ENCODE measurements at regions of chr3 and their contacts with region 1.

Region 1: GRCh38 chr3:168847291-168847883 is 751.7 kb upstream of the GOLIM4 start:
- DNase-seq: no peak
- H3K4me3 Mint-ChIP-seq: no peak overlapping the region
- H3K27ac Mint-ChIP-seq: no peak overlapping the region
- H3K4me1 Mint-ChIP-seq: no peaks in the 10 kb centered on the region
- H3K27me3 Mint-ChIP-seq: peaks cover 7% of the 10 kb centered on the region

Region 2: GRCh38 chr3:168213920-168214319 is 633.5 kb before region 1 on chr3:
- CTCF ChIA-PET with region 1: interaction called, 21 read pairs
- DNase-seq: no peak
- H3K4me3 Mint-ChIP-seq: no peak overlapping the region
- H3K27ac Mint-ChIP-seq: no peak overlapping the region
- H3K4me1 Mint-ChIP-seq: peaks cover 5% of the 10 kb centered on the region
- H3K27me3 Mint-ChIP-seq: no peaks in the 10 kb centered on the region

Measured in activated naive CD4-positive, alpha-beta T cell treated with anti-CD3 and anti-CD28 coated beads, Interleukin-2, amount 10 ng/mL, durations not matched to agents 7 days and 5 days (primary cell).